Activated B cell treated with CpG ODN at 0.5 μM for 24 hours (primary cell): ENCODE measurements at regions of chr6 and their contacts with region 1.

Region 1: GRCh38 chr6:166627033-166627874 is at the start of gene RPS6KA2:
- DNase-seq: peak; percentile 100
- ATAC-seq: peak; percentile 93
- H3K4me3 Mint-ChIP-seq: peak within 1 kb of the TSS; percentile 91
- H3K27ac Mint-ChIP-seq: peak within 1 kb of the TSS; percentile 91
- H3K4me1 Mint-ChIP-seq: peaks cover 22% of the 10 kb centered on the region
- H3K27me3 Mint-ChIP-seq: peaks cover 32% of the 10 kb centered on the region
- CTCF ChIP-seq: no peak
- total RNA-seq, gene RPS6KA2: 13.9 and 14.4 TPM in 2 replicates

Region 2: DNA sequence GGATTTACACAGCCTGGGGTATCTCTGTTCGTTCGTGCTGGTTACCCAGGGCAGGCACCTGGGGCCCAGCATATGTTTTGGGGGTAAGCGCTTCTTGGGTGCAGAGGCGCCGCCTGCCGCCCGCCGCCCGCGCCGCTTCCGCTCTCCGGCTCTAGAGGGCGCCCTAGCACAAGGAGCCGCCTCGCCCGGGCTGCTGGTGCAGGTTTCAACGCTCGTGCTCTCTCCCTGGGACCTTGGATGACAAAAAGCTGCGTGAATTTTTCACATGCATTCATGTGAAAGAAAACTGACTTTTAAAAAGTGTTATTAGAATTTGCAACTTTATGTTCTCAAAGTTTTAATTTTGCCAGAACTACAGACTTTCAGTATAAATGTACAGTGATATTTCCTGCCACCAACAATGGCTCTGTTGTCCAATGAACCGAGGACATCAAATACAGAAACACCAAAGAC is 351.5 kb before region 1 on chr6:
- CTCF ChIA-PET with region 1: no interaction called
- POLR2A ChIA-PET with region 1: no interaction called
- intact Hi-C with region 1: loop called (anchors 5 kb)
- DNase-seq: peak; percentile 85
- ATAC-seq: peak; percentile 94
- H3K4me3 Mint-ChIP-seq: no peak overlapping the region
- H3K27ac Mint-ChIP-seq: no peak overlapping the region
- H3K4me1 Mint-ChIP-seq: peaks cover 8% of the 10 kb centered on the region
- H3K27me3 Mint-ChIP-seq: peaks cover 2% of the 10 kb centered on the region
- CTCF ChIP-seq: peak; percentile 97

Region 3: GRCh38 chr6:166382933-166383801 is 244.1 kb before region 1 on chr6 and contains the start of gene MPC1:
- CTCF ChIA-PET with region 1: interaction called, 4 read pairs
- POLR2A ChIA-PET with region 1: interaction called, 3 read pairs
- intact Hi-C with region 1: loop called (anchors 1 kb)
- DNase-seq: peak; percentile 96
- ATAC-seq: peak; percentile 94
- H3K4me3 Mint-ChIP-seq: peak within 1 kb of the TSS; percentile 92
- H3K27ac Mint-ChIP-seq: peak within 1 kb of the TSS; percentile 76
- H3K4me1 Mint-ChIP-seq: peaks cover 15% of the 10 kb centered on the region
- H3K27me3 Mint-ChIP-seq: no peaks in the 10 kb centered on the region
- CTCF ChIP-seq: no peak
- total RNA-seq, gene MPC1: 16.7 and 17.3 TPM in 2 replicates

Region 4: DNA sequence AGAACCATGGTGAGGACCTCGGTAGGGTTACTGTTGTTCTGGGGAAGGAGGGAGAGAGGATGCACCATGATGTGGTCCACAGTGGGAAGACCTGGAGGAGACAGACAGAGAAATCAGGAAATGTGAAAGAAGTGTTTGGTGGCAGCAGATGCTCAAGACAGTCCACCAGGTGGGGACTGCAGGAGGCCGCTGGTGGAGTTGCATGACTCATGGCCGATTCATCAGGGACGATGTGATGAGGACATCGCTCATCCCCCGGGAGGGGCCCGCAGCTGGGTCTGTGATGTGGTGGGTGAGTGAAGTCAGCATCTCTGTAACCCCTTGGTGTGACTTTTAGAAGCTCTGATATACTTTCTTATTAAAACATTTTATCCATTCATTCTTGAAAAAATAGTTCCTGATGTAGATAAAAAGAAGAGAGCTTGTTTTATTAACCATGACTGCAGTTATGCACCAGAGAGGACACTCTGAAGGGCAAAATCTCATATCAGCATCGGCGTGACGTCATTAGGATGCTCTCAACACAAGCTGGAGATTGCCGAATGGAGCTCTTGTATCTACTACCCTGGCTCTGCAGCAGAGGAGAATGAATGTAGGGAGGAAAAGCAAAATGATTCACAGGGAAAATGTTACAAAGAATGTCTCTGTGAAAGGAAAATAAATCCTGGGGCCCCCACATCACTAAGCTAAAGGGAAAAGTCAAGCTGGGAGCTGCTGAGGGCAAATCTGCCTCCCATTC is 112.0 kb before region 1 on chr6:
- CTCF ChIA-PET with region 1: no interaction called
- POLR2A ChIA-PET with region 1: interaction called, 3 read pairs
- intact Hi-C with region 1: loop called (anchors 10 kb)
- DNase-seq: peak; percentile 33
- ATAC-seq: peak; percentile 78
- H3K4me3 Mint-ChIP-seq: no peak overlapping the region
- H3K27ac Mint-ChIP-seq: no peak overlapping the region
- H3K4me1 Mint-ChIP-seq: peaks cover 20% of the 10 kb centered on the region
- H3K27me3 Mint-ChIP-seq: no peaks in the 10 kb centered on the region
- CTCF ChIP-seq: no peak

Region 5: DNA sequence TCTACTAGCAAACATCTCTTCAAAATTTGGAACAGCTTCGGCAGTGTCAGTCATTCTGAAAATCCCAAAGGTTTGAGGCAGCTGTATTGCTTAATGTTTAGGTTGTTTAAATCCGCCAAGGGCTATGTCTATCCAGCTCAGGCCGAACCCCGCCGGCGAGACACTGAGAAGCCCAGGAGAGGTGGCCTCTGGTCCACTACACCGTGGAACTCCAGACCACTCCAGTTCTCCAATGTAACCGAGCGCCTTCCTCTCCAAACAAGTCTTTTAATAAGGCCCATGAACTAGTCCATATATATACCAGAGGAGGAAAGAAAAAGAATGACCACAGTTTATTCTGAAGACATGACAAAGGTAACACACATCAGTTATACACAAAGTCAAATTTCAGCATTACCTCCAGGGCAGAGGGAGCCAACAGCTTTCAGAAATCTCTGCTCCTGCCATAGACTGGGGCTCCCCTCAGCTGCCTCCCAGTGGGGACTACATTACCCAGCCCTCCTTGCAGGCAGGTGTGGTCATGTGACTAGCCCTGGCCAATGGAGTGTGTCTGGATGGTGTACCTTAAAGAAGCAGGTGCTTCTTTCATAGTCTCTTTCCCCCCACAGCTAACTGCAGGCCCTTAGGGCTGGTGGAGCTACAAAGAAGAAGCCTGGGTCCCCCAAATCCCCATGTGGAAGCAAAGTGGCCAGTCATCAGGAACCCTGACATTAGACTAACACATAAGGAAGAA is 40.7 kb before region 1 on chr6 and contains the start of gene RAMACL:
- CTCF ChIA-PET with region 1: no interaction called
- POLR2A ChIA-PET with region 1: interaction called, 67 read pairs
- intact Hi-C with region 1: loop called (anchors 1 kb)
- DNase-seq: no peak
- ATAC-seq: peak; percentile 60
- H3K4me3 Mint-ChIP-seq: no peak within 1 kb of the TSS
- H3K27ac Mint-ChIP-seq: peak within 1 kb of the TSS; percentile 71
- H3K4me1 Mint-ChIP-seq: peaks cover 42% of the 10 kb centered on the region
- H3K27me3 Mint-ChIP-seq: no peaks in the 10 kb centered on the region
- CTCF ChIP-seq: no peak
- total RNA-seq, gene RAMACL: 1.8 and 2.3 TPM in 2 replicates

Region 6: DNA sequence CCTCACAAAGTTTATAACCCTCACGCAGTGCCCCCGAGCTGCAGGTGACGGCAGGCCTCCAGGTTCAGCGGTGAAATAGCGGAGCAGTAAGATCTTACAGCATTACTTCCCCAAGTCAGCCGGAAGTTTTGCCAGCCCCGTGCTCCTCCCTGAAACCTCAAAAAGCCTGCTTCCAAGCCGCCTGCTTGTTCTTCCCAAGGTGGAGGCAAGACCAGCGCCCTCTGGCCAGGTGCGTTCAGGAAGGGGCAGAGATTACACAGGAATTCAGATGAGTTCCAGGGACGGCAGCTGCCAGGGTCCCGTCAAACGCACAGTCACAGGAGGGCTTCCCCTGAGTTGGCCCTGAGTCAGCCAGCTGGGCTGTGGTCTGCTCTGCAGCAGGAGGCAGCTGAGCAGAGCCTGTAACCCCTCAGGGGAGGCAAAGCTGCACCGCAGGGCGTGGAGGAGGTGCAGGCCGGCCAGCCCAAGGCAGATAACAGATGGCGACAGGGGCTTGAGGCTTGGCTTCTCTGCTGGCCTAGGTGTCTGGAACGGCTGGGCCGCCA is 123.9 kb after region 1 on chr6:
- CTCF ChIA-PET with region 1: no interaction called
- POLR2A ChIA-PET with region 1: no interaction called
- intact Hi-C with region 1: loop called (anchors 1 kb)
- DNase-seq: peak; percentile 63
- ATAC-seq: peak; percentile 99
- H3K4me3 Mint-ChIP-seq: peak overlapping the region; percentile 85
- H3K27ac Mint-ChIP-seq: peak overlapping the region; percentile 80
- H3K4me1 Mint-ChIP-seq: peaks cover 28% of the 10 kb centered on the region
- H3K27me3 Mint-ChIP-seq: peaks cover 10% of the 10 kb centered on the region
- CTCF ChIP-seq: no peak

Region 7: GRCh38 chr6:167047554-167047953 is 420.3 kb after region 1 on chr6:
- CTCF ChIA-PET with region 1: no interaction called
- POLR2A ChIA-PET with region 1: no interaction called
- intact Hi-C with region 1: loop called (anchors 5 kb)
- DNase-seq: peak; percentile 36
- ATAC-seq: peak; percentile 85
- H3K4me3 Mint-ChIP-seq: peak overlapping the region; percentile 76
- H3K27ac Mint-ChIP-seq: peak overlapping the region; percentile 96
- H3K4me1 Mint-ChIP-seq: peaks cover 68% of the 10 kb centered on the region
- H3K27me3 Mint-ChIP-seq: no peaks in the 10 kb centered on the region
- CTCF ChIP-seq: no peak